ENCODE measurements at regions of chr4 and their contacts with region 1.

Region 1: DNA sequence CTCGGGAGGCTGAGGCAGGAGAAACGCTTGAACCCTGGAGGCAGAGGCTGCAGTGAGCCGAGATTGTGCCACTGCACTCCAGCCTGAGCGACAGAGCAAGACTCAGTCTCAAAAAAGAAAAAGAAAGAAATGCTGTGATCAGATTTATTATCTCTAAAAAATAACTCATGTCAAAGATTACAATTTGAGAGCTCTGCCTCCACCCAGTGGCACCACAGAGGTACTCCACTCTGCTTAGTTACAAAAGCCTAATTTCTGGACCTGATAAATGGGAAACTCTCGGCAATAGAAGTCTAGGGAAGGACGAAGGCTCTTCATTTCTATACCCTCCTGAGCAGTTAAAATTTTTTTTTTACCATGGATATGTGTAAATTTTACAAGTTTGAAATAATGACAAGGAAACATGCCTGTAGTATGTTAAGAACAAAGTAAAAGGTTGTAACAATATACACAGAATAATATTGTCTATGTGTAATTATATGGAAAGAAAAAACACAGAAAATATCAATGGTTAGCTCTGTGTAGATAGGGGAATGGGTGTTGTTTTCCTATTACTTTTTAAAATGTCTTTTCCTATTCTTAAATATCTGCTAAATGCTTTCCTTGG is 149.8 kb downstream of the STIM2 start:
- DNase-seq: peak; percentile 73
- ATAC-seq: peak; percentile 80
- H3K4me3 ChIP-seq: no peak overlapping the region
- H3K4me3 Mint-ChIP-seq: no peak overlapping the region
- H3K27ac ChIP-seq: no peak overlapping the region
- H3K27ac Mint-ChIP-seq: peak overlapping the region; percentile 57
- H3K4me1 ChIP-seq: no peaks in the 10 kb centered on the region
- H3K4me1 Mint-ChIP-seq: peaks cover 9% of the 10 kb centered on the region
- H3K27me3 ChIP-seq: no peaks in the 10 kb centered on the region
- H3K27me3 Mint-ChIP-seq: no peaks in the 10 kb centered on the region
- CTCF ChIP-seq: peak; percentile 99

Region 2: GRCh38 chr4:26081795-26082498 is 928.5 kb before region 1 on chr4:
- CTCF ChIA-PET with region 1: no interaction called
- POLR2A ChIA-PET with region 1: no interaction called
- intact Hi-C with region 1: loop called (anchors 5 kb)
- DNase-seq: peak; percentile 56
- ATAC-seq: peak; percentile 41
- H3K4me3 ChIP-seq: no peak overlapping the region
- H3K4me3 Mint-ChIP-seq: no peak overlapping the region
- H3K27ac ChIP-seq: no peak overlapping the region
- H3K27ac Mint-ChIP-seq: no peak overlapping the region
- H3K4me1 ChIP-seq: no peaks in the 10 kb centered on the region
- H3K4me1 Mint-ChIP-seq: peaks cover 8% of the 10 kb centered on the region
- H3K27me3 ChIP-seq: peaks cover 0 to 10% (median 0%) of the 10 kb centered on the region in 4 experiments
- H3K27me3 Mint-ChIP-seq: peaks cover 5% of the 10 kb centered on the region
- CTCF ChIP-seq: peak; percentile 78

Region 3: DNA sequence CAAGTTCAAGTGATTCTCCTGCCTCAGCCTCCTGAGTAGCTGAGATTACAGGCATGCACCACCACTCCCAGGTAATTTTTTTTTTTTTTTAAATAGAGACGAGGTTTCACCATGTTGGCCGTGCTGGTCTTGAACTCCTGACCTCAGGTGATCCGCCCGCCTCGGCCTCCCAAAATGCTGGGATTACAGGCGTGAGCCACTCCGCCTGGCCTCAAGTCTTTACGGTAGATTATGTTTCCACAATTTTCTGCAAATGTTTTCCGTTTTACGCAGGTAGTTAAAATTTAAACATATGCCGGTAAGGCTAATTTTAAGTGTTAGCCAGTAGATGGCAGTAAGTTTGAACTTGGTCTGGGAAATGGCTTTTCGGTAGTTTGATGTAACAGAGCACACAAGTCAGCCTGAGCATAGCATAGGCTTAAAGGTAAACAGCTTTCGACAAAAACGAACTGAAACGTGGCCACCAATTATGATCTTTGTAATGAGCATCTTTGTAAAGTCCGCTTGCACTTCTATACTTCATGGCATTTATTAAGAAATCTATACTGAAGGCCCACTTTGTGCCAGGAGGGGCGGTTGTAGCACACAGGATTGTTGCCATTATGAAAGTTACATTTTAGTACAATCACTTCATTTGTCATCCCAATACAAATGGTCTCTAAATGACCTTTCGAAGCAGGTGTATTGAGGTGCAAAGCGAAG is 551.2 kb before region 1 on chr4:
- CTCF ChIA-PET with region 1: interaction called, 125 read pairs
- POLR2A ChIA-PET with region 1: no interaction called
- intact Hi-C with region 1: loop called (anchors 1 kb)
- DNase-seq: peak; percentile 61
- ATAC-seq: no peak
- H3K4me3 ChIP-seq: peak overlapping the region in 1 of 5 experiments; percentile 17
- H3K4me3 Mint-ChIP-seq: peak overlapping the region; percentile 53
- H3K27ac ChIP-seq: no peak overlapping the region
- H3K27ac Mint-ChIP-seq: no peak overlapping the region
- H3K4me1 ChIP-seq: peaks cover 3 to 4% of the 10 kb centered on the region in 2 donors
- H3K4me1 Mint-ChIP-seq: peaks cover 4% of the 10 kb centered on the region
- H3K27me3 ChIP-seq: no peaks in the 10 kb centered on the region
- H3K27me3 Mint-ChIP-seq: peaks cover 5% of the 10 kb centered on the region
- CTCF ChIP-seq: peak; percentile 68

Region 4: DNA sequence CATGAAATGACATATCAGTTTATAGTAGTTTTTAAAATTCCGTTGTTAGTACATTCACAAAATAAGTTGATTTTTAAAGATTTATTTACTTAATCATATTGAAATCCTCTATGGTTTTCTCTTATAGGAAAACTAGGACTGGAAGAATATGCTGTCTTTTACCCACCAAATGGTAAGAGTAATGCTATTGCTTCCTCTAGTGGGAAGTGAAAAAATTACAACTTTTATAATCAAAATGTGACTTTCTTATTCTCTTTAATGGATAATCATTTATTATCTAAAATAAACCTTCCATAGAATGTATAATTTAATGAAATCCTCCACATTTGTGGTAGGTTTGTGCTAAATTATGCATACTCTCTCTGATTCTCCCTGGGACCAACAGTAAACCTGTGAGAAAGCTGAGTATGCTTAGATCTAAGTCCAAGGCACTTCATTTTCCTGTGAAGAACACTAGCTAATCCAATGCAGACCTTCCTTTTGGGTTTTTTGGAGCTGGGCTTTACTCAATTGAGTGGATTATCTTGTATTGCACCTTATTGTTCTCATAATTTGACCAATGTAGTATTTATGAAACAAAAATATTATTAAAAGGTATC is 290.4 kb before region 1 on chr4:
- CTCF ChIA-PET with region 1: interaction called, 6 read pairs
- POLR2A ChIA-PET with region 1: no interaction called
- intact Hi-C with region 1: loop called (anchors 5 kb)
- DNase-seq: no peak
- ATAC-seq: no peak
- H3K4me3 ChIP-seq: no peak overlapping the region
- H3K4me3 Mint-ChIP-seq: no peak overlapping the region
- H3K27ac ChIP-seq: no peak overlapping the region
- H3K27ac Mint-ChIP-seq: no peak overlapping the region
- H3K4me1 ChIP-seq: peaks cover 0 to 6% of the 10 kb centered on the region in 2 donors
- H3K4me1 Mint-ChIP-seq: peaks cover 7% of the 10 kb centered on the region
- H3K27me3 ChIP-seq: no peaks in the 10 kb centered on the region
- H3K27me3 Mint-ChIP-seq: no peaks in the 10 kb centered on the region
- CTCF ChIP-seq: peak; percentile 59

Region 5: DNA sequence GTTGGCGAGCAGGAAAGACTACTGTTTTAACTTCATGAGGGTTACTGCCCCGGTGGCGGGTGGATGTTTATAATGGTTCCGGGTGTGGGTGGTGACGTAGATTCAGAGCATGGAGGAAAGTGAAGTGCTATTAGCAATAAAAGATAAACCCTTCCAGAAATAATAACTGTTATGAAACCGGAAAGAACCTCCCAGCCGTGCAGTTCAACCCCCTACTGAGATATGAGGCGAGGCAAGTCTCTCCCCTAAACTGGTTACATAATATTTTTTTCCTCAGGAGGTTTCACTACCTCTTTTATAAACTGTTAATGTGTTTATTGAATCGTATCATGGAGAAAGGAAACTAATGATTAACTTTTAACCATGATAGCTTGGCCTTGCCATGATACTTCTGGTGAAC is 183.7 kb before region 1 on chr4:
- CTCF ChIA-PET with region 1: interaction called, 7 read pairs
- POLR2A ChIA-PET with region 1: no interaction called
- intact Hi-C with region 1: loop called (anchors 5 kb)
- DNase-seq: peak; percentile 84
- ATAC-seq: peak; percentile 83
- H3K4me3 ChIP-seq: peak overlapping the region in 4 of 5 experiments; percentile 7 to 59 (median 24)
- H3K4me3 Mint-ChIP-seq: peak overlapping the region; percentile 77
- H3K27ac ChIP-seq: peak overlapping the region; percentile 29 to 45
- H3K27ac Mint-ChIP-seq: peak overlapping the region; percentile 62
- H3K4me1 ChIP-seq: peaks cover 75 to 78% of the 10 kb centered on the region in 2 donors
- H3K4me1 Mint-ChIP-seq: peaks cover 79% of the 10 kb centered on the region
- H3K27me3 ChIP-seq: peaks cover 0 to 27% (median 9%) of the 10 kb centered on the region in 4 experiments
- H3K27me3 Mint-ChIP-seq: peaks cover 12% of the 10 kb centered on the region
- CTCF ChIP-seq: no peak

Region 6: GRCh38 chr4:26885912-26886274 is 124.5 kb before region 1 on chr4:
- CTCF ChIA-PET with region 1: interaction called, 11 read pairs
- POLR2A ChIA-PET with region 1: no interaction called
- intact Hi-C with region 1: no loop called
- DNase-seq: peak; percentile 87
- ATAC-seq: peak; percentile 74
- H3K4me3 ChIP-seq: peak overlapping the region in 4 of 5 experiments; percentile 25 to 61 (median 42)
- H3K4me3 Mint-ChIP-seq: peak overlapping the region; percentile 78
- H3K27ac ChIP-seq: peak overlapping the region; percentile 95 to 98
- H3K27ac Mint-ChIP-seq: peak overlapping the region; percentile 86
- H3K4me1 ChIP-seq: peaks cover 70 to 71% of the 10 kb centered on the region in 2 donors
- H3K4me1 Mint-ChIP-seq: peaks cover 83% of the 10 kb centered on the region
- H3K27me3 ChIP-seq: no peaks in the 10 kb centered on the region
- H3K27me3 Mint-ChIP-seq: no peaks in the 10 kb centered on the region
- CTCF ChIP-seq: no peak

Region 7: DNA sequence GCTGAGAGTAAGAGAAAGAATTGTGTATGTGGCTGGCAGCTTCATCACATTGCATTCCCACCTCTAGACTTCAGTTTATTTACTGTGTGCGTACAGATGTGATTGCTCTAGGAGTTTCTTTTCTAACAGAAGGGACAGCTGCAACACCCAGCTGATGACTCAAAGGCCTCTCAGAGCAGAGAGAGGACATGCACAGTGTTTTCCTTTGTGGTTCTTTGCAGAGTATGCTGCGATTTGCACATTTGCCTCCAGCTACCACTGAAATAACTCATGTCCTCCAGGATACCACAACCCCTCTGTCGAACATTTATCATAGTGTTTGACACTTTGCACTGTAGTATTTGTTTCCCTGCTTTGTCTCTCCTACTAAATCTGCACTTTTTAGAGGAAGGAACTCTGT is 144.3 kb after region 1 on chr4:
- CTCF ChIA-PET with region 1: no interaction called
- POLR2A ChIA-PET with region 1: no interaction called
- intact Hi-C with region 1: no loop called
- DNase-seq: no peak
- ATAC-seq: no peak
- H3K4me3 ChIP-seq: no peak overlapping the region
- H3K4me3 Mint-ChIP-seq: no peak overlapping the region
- H3K27ac ChIP-seq: no peak overlapping the region
- H3K27ac Mint-ChIP-seq: no peak overlapping the region
- H3K4me1 ChIP-seq: no peaks in the 10 kb centered on the region
- H3K4me1 Mint-ChIP-seq: no peaks in the 10 kb centered on the region
- H3K27me3 ChIP-seq: peaks cover 0 to 3% (median 2%) of the 10 kb centered on the region in 4 experiments
- H3K27me3 Mint-ChIP-seq: peaks cover 17% of the 10 kb centered on the region
- CTCF ChIP-seq: no peak